ENCODE measurements at regions of chr2 and their contacts with region 1.

Region 1: DNA sequence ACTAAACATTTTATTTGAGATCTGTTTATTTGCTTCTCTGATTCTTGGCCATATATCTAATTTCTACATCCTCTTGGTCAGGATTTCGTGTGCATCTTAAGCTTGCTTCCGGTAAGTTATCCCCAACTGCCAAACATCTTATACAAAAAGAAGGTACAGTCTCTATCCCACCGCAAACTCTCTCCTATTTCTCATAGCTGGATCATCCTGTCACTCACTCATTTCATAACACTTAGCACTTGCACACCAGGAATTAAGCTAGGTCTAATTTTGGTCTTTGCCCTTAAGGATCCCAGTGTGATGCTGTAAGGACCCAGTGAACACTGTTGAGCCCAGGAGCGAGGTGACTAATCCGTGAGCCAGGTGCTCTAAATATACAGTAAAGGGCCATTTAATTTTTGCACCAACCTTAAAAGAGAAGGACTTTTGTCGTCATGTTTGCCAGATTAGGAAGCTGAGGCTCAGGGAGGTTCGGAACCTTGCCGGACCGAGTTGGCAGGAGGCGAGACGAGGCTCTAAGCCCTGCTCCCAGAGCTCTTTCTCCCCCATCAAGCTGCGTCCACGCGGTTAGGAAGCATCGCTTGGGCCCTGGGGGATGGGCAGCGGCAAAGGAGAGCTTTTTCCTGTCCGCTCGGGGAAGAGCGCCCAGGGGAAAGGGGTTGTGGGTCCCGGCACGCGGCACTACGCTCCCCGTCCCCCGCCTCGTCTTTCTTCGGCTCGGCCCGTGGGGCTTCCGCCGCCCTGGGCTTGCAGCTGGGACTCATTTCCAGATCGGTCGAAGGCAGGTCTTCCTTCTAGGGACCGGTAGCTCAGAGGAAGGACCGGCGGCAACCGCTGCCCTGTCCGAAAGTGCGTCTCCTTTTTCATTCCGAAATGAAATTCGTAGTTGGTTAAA is 4.1 kb upstream of the ITPRIPL1 start:
- DNase-seq: peak; percentile 34
- ATAC-seq: peak; percentile 15
- H3K4me3 Mint-ChIP-seq: peak overlapping the region; percentile 94
- H3K27ac Mint-ChIP-seq: peak overlapping the region; percentile 85
- H3K4me1 Mint-ChIP-seq: peaks cover 55% of the 10 kb centered on the region
- H3K27me3 Mint-ChIP-seq: no peaks in the 10 kb centered on the region
- CTCF ChIP-seq: no peak

Region 2: GRCh38 chr2:96218508-96219131 is 102.4 kb before region 1 on chr2:
- CTCF ChIA-PET with region 1: no interaction called
- POLR2A ChIA-PET with region 1: no interaction called
- intact Hi-C with region 1: no loop called
- DNase-seq: no peak
- ATAC-seq: no peak
- H3K4me3 Mint-ChIP-seq: no peak overlapping the region
- H3K27ac Mint-ChIP-seq: no peak overlapping the region
- H3K4me1 Mint-ChIP-seq: peaks cover 5% of the 10 kb centered on the region
- H3K27me3 Mint-ChIP-seq: no peaks in the 10 kb centered on the region
- CTCF ChIP-seq: no peak

Region 3: GRCh38 chr2:96336104-96336775 is 15.3 kb after region 1 on chr2:
- CTCF ChIA-PET with region 1: no interaction called
- POLR2A ChIA-PET with region 1: interaction called, 115 read pairs
- intact Hi-C with region 1: loop called (anchors 1 kb)
- DNase-seq: no peak
- ATAC-seq: no peak
- H3K4me3 Mint-ChIP-seq: peak overlapping the region; percentile 87
- H3K27ac Mint-ChIP-seq: peak overlapping the region; percentile 91
- H3K4me1 Mint-ChIP-seq: peaks cover 36% of the 10 kb centered on the region
- H3K27me3 Mint-ChIP-seq: no peaks in the 10 kb centered on the region
- CTCF ChIP-seq: no peak

Region 4: GRCh38 chr2:96344011-96344410 is 23.0 kb after region 1 on chr2:
- CTCF ChIA-PET with region 1: interaction called, 5 read pairs
- POLR2A ChIA-PET with region 1: interaction called, 22 read pairs
- intact Hi-C with region 1: loop called (anchors 1 kb)
- DNase-seq: no peak
- ATAC-seq: peak; percentile 99
- H3K4me3 Mint-ChIP-seq: no peak overlapping the region
- H3K27ac Mint-ChIP-seq: peak overlapping the region; percentile 82
- H3K4me1 Mint-ChIP-seq: peaks cover 41% of the 10 kb centered on the region
- H3K27me3 Mint-ChIP-seq: no peaks in the 10 kb centered on the region
- CTCF ChIP-seq: no peak

Measured in activated B cell treated with CpG ODN at 0.5 μM for 24 hours (primary cell).